Panc1 (cell line): ENCODE measurements at regions of chr17 and their contacts with region 1.

Region 1: DNA sequence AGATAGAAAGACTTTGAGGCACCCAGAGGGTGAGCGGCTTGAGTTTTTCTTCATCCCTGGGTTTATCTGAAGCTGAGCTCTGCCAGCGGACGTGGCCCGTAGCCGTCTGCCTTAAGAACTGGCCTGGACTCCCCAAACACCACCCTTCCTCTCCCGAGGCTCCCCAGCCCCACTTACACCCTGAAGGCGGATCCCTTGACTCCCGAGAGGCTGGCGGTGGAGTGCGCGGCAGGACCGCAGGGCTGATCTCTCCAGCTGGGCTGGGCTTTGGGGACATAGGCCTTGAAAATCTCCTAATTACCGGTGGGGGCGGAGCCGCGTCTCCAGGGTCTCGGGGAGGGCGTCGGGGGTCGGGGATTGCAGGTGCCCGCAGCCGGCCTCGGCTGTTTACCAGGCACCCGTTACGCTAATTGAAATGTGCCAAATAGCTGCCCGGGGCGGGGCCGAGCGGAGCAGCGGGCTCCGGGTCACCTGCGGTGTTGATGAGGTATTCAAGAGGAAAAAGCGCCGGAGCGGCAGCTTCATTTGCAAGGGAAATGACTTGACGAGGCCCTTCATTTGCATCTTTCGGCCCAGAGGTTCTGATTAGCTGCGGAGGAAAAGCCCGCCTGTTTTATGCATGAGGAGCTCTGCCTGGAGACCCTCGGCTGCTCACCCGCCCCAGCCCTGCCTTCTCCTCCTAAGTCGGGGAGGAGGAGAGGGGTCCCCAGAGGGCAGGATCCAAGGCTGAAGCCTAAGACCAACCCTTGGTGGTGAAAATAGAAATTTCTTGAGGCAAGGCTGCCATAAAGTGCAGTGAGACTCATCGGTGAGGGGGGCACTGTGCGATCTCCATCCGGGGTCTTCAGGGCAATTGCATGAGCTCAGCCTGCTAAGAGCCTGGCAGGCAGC is 100.7 kb downstream of the MGAT5B start:
- DNase-seq: no peak
- ATAC-seq: peak; percentile 61
- H3K4me3 ChIP-seq: peak overlapping the region; percentile 32 to 55
- H3K27ac ChIP-seq: no peak overlapping the region
- H3K4me1 ChIP-seq: peaks cover 10% of the 10 kb centered on the region
- H3K27me3 ChIP-seq: no peaks in the 10 kb centered on the region; the same call in 1 of the 2 replicates
- CTCF ChIP-seq: no peak

Region 2: DNA sequence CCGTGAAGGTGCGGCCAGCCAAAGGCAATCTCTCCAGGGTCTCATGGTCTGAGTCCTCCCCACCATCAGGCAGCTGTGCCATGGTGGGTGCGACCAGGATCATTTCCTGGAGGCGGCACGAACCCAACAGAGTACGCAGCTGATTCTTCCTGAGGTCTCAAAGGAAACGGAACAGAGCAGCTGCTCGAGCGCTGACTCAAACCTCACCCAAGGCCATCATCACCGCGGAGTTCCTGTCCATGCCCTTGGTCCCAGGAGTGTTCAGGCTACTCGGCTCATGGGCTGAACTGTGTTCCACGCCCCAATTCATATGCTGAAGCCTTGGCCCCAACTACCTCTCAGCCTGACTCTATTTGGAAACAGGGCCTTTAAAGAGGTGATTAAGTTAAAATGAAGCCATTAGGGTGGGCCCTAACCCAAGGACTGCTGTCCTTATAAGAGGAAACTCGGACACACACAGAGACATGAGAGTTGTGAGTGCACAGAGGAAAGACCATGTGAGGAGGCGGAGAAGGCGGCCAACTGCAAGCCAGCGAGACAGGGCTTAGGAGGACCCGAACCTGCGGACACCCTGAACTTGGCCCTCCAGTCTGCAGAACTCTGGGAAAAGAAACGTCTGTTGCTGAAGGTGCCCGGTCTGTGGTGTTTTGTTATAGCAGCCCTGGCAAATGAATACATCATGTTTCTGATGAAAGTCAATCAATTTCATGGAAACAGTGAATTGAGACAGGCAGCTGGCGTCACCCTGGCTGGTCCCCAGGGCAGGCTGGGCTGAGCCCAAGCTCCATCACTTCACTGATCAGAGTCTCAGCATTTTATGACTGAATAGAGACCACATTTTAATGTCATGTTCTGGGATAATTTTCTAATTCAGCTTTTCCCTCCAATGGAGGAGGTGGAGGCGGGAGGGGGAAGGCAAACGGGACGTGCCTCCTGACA is 271.9 kb before region 1 on chr17:
- CTCF ChIA-PET with region 1: interaction called, 10 read pairs
- POLR2A ChIA-PET with region 1: no interaction called
- in situ Hi-C with region 1: no loop called
- intact Hi-C with region 1: no loop called
- DNase-seq: no peak
- ATAC-seq: no peak
- H3K4me3 ChIP-seq: no peak overlapping the region
- H3K27ac ChIP-seq: peak overlapping the region; percentile 18
- H3K4me1 ChIP-seq: peaks cover 19% of the 10 kb centered on the region
- H3K27me3 ChIP-seq: no peaks in the 10 kb centered on the region
- CTCF ChIP-seq: no peak

Region 3: GRCh38 chr17:76905836-76906235 is 63.1 kb before region 1 on chr17:
- CTCF ChIA-PET with region 1: no interaction called
- POLR2A ChIA-PET with region 1: no interaction called
- in situ Hi-C with region 1: no loop called
- intact Hi-C with region 1: no loop called
- DNase-seq: no peak
- ATAC-seq: peak; percentile 32; the same call in 1 of the 2 replicates
- H3K4me3 ChIP-seq: no peak overlapping the region
- H3K27ac ChIP-seq: no peak overlapping the region
- H3K4me1 ChIP-seq: peaks cover 4% of the 10 kb centered on the region; the same call in 1 of the 2 replicates
- H3K27me3 ChIP-seq: no peaks in the 10 kb centered on the region
- CTCF ChIP-seq: no peak

Region 4: GRCh38 chr17:76957678-76958464 is 11.1 kb before region 1 on chr17:
- CTCF ChIA-PET with region 1: no interaction called
- POLR2A ChIA-PET with region 1: no interaction called
- in situ Hi-C with region 1: no loop called
- intact Hi-C with region 1: no loop called
- DNase-seq: no peak
- ATAC-seq: no peak
- H3K4me3 ChIP-seq: no peak overlapping the region
- H3K27ac ChIP-seq: no peak overlapping the region
- H3K4me1 ChIP-seq: no peaks in the 10 kb centered on the region
- H3K27me3 ChIP-seq: no peaks in the 10 kb centered on the region
- CTCF ChIP-seq: no peak

Region 5: DNA sequence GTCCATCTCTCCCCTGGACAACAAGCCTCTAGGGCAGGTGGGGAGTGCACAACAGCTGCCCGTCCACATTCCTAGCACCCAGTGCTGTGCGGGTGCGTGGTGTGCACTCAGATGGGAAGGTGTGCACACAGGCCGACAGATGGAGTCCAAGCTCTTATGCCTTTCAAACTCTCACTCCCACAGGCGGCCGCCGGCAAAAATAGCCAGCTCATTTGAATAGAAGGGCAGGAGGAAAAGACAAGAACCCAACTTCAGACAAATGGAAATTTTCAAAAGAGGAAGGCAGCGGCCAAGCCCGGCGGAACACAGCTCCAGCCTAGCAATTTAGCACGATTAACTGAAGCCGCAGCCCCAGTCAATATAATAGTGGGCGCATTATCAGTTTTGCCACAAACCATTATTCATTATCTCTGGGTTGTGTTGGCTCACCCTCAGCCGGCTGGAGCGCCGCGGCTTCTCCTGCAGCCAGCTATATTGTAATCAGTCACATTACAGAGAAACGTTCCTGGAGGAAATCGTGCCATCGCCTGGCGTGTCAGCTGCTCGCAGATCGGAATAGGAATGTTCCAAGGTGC is 67.9 kb after region 1 on chr17:
- CTCF ChIA-PET with region 1: interaction called, 19 read pairs
- POLR2A ChIA-PET with region 1: interaction called, 7 read pairs
- in situ Hi-C with region 1: no loop called
- intact Hi-C with region 1: no loop called
- DNase-seq: no peak
- ATAC-seq: peak; percentile 32
- H3K4me3 ChIP-seq: no peak overlapping the region
- H3K27ac ChIP-seq: no peak overlapping the region
- H3K4me1 ChIP-seq: no peaks in the 10 kb centered on the region
- H3K27me3 ChIP-seq: no peaks in the 10 kb centered on the region
- CTCF ChIP-seq: no peak